ENCODE measurements at regions of chr5 and their contacts with region 1.

Region 1: GRCh38 chr5:96752341-96753016 is 55.3 kb downstream of the ERAP1 start:
- DNase-seq: peak; percentile 36
- ATAC-seq: no peak
- H3K4me3 ChIP-seq: no peak overlapping the region
- H3K27ac ChIP-seq: no peak overlapping the region
- H3K4me1 ChIP-seq: no peaks in the 10 kb centered on the region
- H3K27me3 ChIP-seq: no peaks in the 10 kb centered on the region
- CTCF ChIP-seq: peak; percentile 55 to 80 (median 65); a peak in 5 of 6 replicates
- POLR2A ChIP-seq: no peak
- RAD21 ChIP-seq: peak; percentile 67

Region 2: GRCh38 chr5:96476654-96477053 is 275.8 kb before region 1 on chr5:
- CTCF ChIA-PET with region 1: no interaction called
- POLR2A ChIA-PET with region 1: no interaction called
- RAD21 ChIA-PET with region 1: no interaction called
- intact Hi-C with region 1: no loop called
- DNase-seq: no peak
- ATAC-seq: no peak
- H3K4me3 ChIP-seq: no peak overlapping the region
- H3K27ac ChIP-seq: no peak overlapping the region
- H3K4me1 ChIP-seq: no peaks in the 10 kb centered on the region
- H3K27me3 ChIP-seq: peaks cover 18% of the 10 kb centered on the region; the same call in 1 of the 2 replicates
- CTCF ChIP-seq: no peak
- POLR2A ChIP-seq: no peak
- RAD21 ChIP-seq: no peak

Region 3: GRCh38 chr5:96763026-96763425 is 10.5 kb after region 1 on chr5:
- CTCF ChIA-PET with region 1: interaction called, 19 read pairs
- POLR2A ChIA-PET with region 1: no interaction called
- RAD21 ChIA-PET with region 1: no interaction called
- intact Hi-C with region 1: no loop called
- DNase-seq: no peak
- ATAC-seq: no peak
- H3K4me3 ChIP-seq: no peak overlapping the region
- H3K27ac ChIP-seq: no peak overlapping the region
- H3K4me1 ChIP-seq: no peaks in the 10 kb centered on the region
- H3K27me3 ChIP-seq: no peaks in the 10 kb centered on the region
- CTCF ChIP-seq: no peak
- POLR2A ChIP-seq: no peak
- RAD21 ChIP-seq: no peak

Region 4: GRCh38 chr5:96868603-96869371 is 116.3 kb after region 1 on chr5:
- CTCF ChIA-PET with region 1: interaction called, 4 read pairs
- POLR2A ChIA-PET with region 1: no interaction called
- RAD21 ChIA-PET with region 1: interaction called, 3 read pairs
- intact Hi-C with region 1: loop called (anchors 1 kb)
- DNase-seq: peak; percentile 57
- ATAC-seq: peak; percentile 97
- H3K4me3 ChIP-seq: no peak overlapping the region
- H3K27ac ChIP-seq: no peak overlapping the region
- H3K4me1 ChIP-seq: no peaks in the 10 kb centered on the region
- H3K27me3 ChIP-seq: no peaks in the 10 kb centered on the region
- CTCF ChIP-seq: peak; percentile 76 to 95 (median 92)
- POLR2A ChIP-seq: no peak
- RAD21 ChIP-seq: peak; percentile 91

Region 5: GRCh38 chr5:96934708-96935558 is 182.5 kb after region 1 on chr5:
- CTCF ChIA-PET with region 1: interaction called, 3 read pairs
- POLR2A ChIA-PET with region 1: no interaction called
- RAD21 ChIA-PET with region 1: no interaction called
- intact Hi-C with region 1: loop called (anchors 5 kb)
- DNase-seq: peak; percentile 93
- ATAC-seq: peak; percentile 82
- H3K4me3 ChIP-seq: peak overlapping the region; percentile 70 to 83
- H3K27ac ChIP-seq: peak overlapping the region; percentile 87
- H3K4me1 ChIP-seq: peaks cover 16 to 34% of the 10 kb centered on the region in 2 experiments; a peak in 3 of 4 replicates
- H3K27me3 ChIP-seq: no peaks in the 10 kb centered on the region
- CTCF ChIP-seq: no peak
- POLR2A ChIP-seq: peak; percentile 51
- RAD21 ChIP-seq: no peak

Region 6: GRCh38 chr5:97044052-97044451 is 291.6 kb after region 1 on chr5:
- CTCF ChIA-PET with region 1: interaction called, 3 read pairs
- POLR2A ChIA-PET with region 1: no interaction called
- RAD21 ChIA-PET with region 1: interaction called in 1 of 2 experiments, 6 read pairs
- intact Hi-C with region 1: loop called (anchors 5 kb)
- DNase-seq: peak; percentile 4
- ATAC-seq: peak; percentile 91
- H3K4me3 ChIP-seq: no peak overlapping the region
- H3K27ac ChIP-seq: no peak overlapping the region
- H3K4me1 ChIP-seq: no peaks in the 10 kb centered on the region
- H3K27me3 ChIP-seq: no peaks in the 10 kb centered on the region
- CTCF ChIP-seq: peak; percentile 37 to 60 (median 57); a peak in 5 of 6 replicates
- POLR2A ChIP-seq: no peak
- RAD21 ChIP-seq: peak; percentile 54

Region 7: DNA sequence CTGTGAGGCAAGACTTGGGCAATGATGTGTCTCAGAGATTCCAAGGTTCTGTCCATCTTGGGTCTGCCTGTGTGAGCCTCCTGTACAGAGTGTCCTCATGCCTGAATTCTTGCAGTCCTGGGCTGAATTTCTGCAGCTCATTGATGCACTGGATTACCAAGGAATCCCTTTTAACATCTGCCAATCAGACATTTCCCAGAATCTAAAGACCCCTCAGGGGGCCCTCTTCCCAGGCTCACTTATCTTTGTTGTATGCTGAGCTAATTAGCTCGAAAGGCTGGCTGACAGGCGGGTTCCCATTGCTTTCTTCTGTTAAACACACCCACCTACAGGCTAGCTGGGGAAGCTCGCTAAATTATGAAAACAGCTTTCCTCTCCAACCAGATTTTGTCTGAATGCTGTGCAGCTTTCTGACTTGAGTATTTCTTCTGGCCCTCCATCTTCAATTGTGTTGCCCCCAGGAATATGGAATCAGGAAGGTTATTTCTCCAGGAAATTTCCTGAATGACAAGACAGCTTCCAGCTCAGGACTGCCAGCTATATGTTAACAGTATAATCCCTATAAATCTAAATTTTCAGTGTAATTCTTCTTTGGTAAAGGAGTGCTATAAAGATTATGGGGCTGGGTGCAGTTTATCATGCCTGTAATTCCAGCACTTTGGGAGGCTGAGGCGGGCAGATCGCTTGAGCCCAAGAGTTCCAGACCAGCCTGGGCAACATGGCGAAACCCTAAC is 390.2 kb after region 1 on chr5 and contains the start of gene LIX1:
- CTCF ChIA-PET with region 1: interaction called, 17 read pairs
- POLR2A ChIA-PET with region 1: no interaction called
- RAD21 ChIA-PET with region 1: interaction called in 1 of 2 experiments, 4 read pairs
- intact Hi-C with region 1: loop called (anchors 5 kb)
- DNase-seq: no peak
- ATAC-seq: peak; percentile 90
- H3K4me3 ChIP-seq: no peak within 1 kb of the TSS
- H3K27ac ChIP-seq: no peak within 1 kb of the TSS
- H3K4me1 ChIP-seq: no peaks in the 10 kb centered on the region
- H3K27me3 ChIP-seq: no peaks in the 10 kb centered on the region
- CTCF ChIP-seq: peak; percentile 55 to 66 (median 63); a peak in 5 of 6 replicates
- POLR2A ChIP-seq: no peak
- RAD21 ChIP-seq: peak; percentile 81
- total RNA-seq, gene LIX1: not detected

Region 8: GRCh38 chr5:97162045-97162444 is 409.6 kb after region 1 on chr5:
- CTCF ChIA-PET with region 1: interaction called, 22 read pairs
- POLR2A ChIA-PET with region 1: no interaction called
- RAD21 ChIA-PET with region 1: interaction called in 1 of 2 experiments, 4 read pairs
- intact Hi-C with region 1: loop called (anchors 1 kb)
- DNase-seq: peak; percentile 79
- ATAC-seq: peak; percentile 77
- H3K4me3 ChIP-seq: no peak overlapping the region
- H3K27ac ChIP-seq: no peak overlapping the region
- H3K4me1 ChIP-seq: peaks cover 7 to 9% of the 10 kb centered on the region in 2 experiments; a peak in 3 of 4 replicates
- H3K27me3 ChIP-seq: no peaks in the 10 kb centered on the region
- CTCF ChIP-seq: peak; percentile 67 to 95 (median 81)
- POLR2A ChIP-seq: no peak
- RAD21 ChIP-seq: peak; percentile 85

Region 9: GRCh38 chr5:98602534-98603112 is 1850.1 kb after region 1 on chr5:
- CTCF ChIA-PET with region 1: no interaction called
- POLR2A ChIA-PET with region 1: no interaction called
- RAD21 ChIA-PET with region 1: no interaction called
- intact Hi-C with region 1: no loop called
- DNase-seq: no peak
- ATAC-seq: no peak
- H3K4me3 ChIP-seq: no peak overlapping the region
- H3K27ac ChIP-seq: no peak overlapping the region
- H3K4me1 ChIP-seq: no peaks in the 10 kb centered on the region
- H3K27me3 ChIP-seq: no peaks in the 10 kb centered on the region
- CTCF ChIP-seq: no peak
- POLR2A ChIP-seq: no peak
- RAD21 ChIP-seq: no peak